Stomach (tissue), 19 donors: ENCODE measurements at regions of chr13 and their contacts with region 1.

Region 1: DNA sequence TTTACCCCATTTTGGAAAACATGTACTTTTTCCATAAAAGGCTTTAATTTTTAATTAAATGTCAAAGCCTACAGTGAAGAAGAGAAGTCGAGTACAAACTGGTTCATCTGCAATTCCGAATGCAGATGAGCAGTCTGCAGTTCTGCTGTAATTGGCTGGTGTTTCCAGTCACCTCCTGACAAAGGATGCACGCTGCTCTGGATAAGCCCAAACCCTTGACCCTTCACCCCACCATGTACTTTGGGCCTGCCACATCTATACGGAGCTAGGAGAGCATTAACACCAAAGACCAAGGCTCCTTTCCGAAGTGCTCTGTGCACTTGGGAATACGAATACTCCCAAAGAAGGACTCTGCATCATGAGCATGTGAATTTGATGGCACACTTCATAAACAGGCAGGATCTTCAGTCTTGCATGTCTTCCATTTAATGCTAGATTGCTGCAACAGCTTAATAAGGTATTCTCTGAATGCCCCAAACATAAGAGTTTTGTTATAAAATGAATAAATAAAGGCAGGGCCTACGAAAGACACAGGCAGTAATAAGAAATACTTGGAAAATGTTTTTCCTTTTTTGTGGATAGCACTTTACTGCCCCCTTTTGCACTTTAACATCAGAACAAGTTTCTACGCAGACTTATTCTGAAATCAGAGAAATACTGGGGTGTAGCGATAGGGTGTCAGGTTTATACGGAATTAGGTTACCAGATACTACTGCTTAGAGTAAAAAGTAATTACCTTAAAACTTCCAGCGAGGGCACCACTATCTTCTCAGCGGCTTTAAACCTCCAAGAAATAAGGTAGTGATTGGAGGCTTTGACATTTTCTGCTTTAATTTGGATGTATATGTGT is 15.0 kb downstream of the EFNB2 start:
- DNase-seq: peak in 1 of 2 donors; percentile 69
- H3K4me3 ChIP-seq: no peak overlapping the region
- H3K27ac ChIP-seq: no peak overlapping the region
- H3K4me1 ChIP-seq: peaks cover 11 to 48% (median 21%) of the 10 kb centered on the region in 4 donors
- H3K27me3 ChIP-seq: no peaks in the 10 kb centered on the region
- CTCF ChIP-seq: peak in 2 of 7 experiments; percentile 13 to 16
- EP300 ChIP-seq: no peak
- POLR2A ChIP-seq: no peak

Region 2: GRCh38 chr13:106083620-106084350 is 436.6 kb before region 1 on chr13:
- intact Hi-C with region 1: loop called (anchors 10 kb)
- DNase-seq: peak; percentile 41 to 65
- H3K4me3 ChIP-seq: no peak overlapping the region
- H3K27ac ChIP-seq: peak overlapping the region in 2 of 5 donors; percentile 12 to 37
- H3K4me1 ChIP-seq: peaks cover 0 to 12% (median 0%) of the 10 kb centered on the region in 4 donors
- H3K27me3 ChIP-seq: no peaks in the 10 kb centered on the region
- CTCF ChIP-seq: peak in 4 of 7 experiments; percentile 42 to 67 (median 62)
- EP300 ChIP-seq: no peak
- POLR2A ChIP-seq: no peak

Region 3: DNA sequence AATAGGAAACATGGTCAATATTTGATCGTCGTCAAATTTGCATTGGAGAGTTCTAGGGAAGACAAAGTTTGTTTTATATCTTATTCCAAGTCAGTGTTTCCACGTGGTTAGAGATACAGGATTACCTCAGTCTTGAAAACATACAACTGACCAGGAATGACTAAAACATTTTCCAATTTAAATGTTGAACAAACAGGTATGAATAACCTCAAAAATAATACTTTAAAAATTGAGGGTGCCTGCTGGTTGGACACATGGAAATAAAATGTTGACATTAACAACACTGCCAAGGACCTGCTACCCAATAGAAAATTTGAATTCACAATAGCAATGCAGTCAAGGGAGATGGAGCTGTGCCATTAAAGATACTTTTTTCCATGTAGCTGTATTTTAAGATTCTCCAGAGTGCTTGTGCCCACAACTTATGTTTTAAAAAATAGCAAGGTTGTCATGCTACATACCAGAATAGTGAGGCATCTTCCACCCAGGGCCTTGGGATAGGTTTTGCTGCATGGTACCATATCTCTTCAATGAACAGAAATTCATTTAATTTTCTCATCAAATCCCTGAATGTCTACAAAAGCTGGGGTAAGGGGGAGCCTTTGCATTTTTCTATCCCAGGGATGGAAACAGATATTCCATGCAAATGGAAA is 245.8 kb before region 1 on chr13:
- intact Hi-C with region 1: no loop called
- DNase-seq: no peak
- H3K4me3 ChIP-seq: no peak overlapping the region
- H3K27ac ChIP-seq: no peak overlapping the region
- H3K4me1 ChIP-seq: no peaks in the 10 kb centered on the region
- H3K27me3 ChIP-seq: no peaks in the 10 kb centered on the region
- CTCF ChIP-seq: no peak
- EP300 ChIP-seq: no peak
- POLR2A ChIP-seq: no peak